PC-3 (cell line): ENCODE measurements at regions of chr7 and their contacts with region 1.

Region 1: GRCh38 chr7:87426160-87426559 is 49.3 kb downstream of the ABCB4 start:
- DNase-seq: no peak
- ATAC-seq: no peak
- H3K4me3 ChIP-seq: no peak overlapping the region
- H3K27ac ChIP-seq: no peak overlapping the region
- H3K4me1 ChIP-seq: no peaks in the 10 kb centered on the region
- H3K27me3 ChIP-seq: peaks cover 36% of the 10 kb centered on the region
- CTCF ChIP-seq: no peak

Region 2: GRCh38 chr7:87404674-87405073 is 21.5 kb before region 1 on chr7:
- CTCF ChIA-PET with region 1: no interaction called
- POLR2A ChIA-PET with region 1: no interaction called
- intact Hi-C with region 1: no loop called
- DNase-seq: no peak
- ATAC-seq: no peak
- H3K4me3 ChIP-seq: no peak overlapping the region
- H3K27ac ChIP-seq: no peak overlapping the region
- H3K4me1 ChIP-seq: peaks cover 5% of the 10 kb centered on the region
- H3K27me3 ChIP-seq: no peaks in the 10 kb centered on the region
- CTCF ChIP-seq: no peak

Region 3: GRCh38 chr7:87886875-87887274 is 460.7 kb after region 1 on chr7:
- CTCF ChIA-PET with region 1: no interaction called
- POLR2A ChIA-PET with region 1: no interaction called
- intact Hi-C with region 1: loop called (anchors 10 kb)
- DNase-seq: peak; percentile 68
- ATAC-seq: no peak
- H3K4me3 ChIP-seq: no peak overlapping the region
- H3K27ac ChIP-seq: no peak overlapping the region
- H3K4me1 ChIP-seq: no peaks in the 10 kb centered on the region
- H3K27me3 ChIP-seq: no peaks in the 10 kb centered on the region
- CTCF ChIP-seq: peak; percentile 64